Dendritic cell treated with granulocyte-macrophage colony-stimulating factor and Interleukin-4, amounts not matched to agents 40 ng/mL and 50 ng/mL, for 4 days (primary cell): ENCODE measurements at regions of chr7 and their contacts with region 1.

Region 1: GRCh38 chr7:141754939-141755338 is 9.0 kb upstream of the TAS2R3 start:
- H3K4me3 Mint-ChIP-seq: no peak overlapping the region
- H3K27ac Mint-ChIP-seq: no peak overlapping the region
- H3K4me1 Mint-ChIP-seq: no peaks in the 10 kb centered on the region
- H3K27me3 Mint-ChIP-seq: no peaks in the 10 kb centered on the region

Region 2: DNA sequence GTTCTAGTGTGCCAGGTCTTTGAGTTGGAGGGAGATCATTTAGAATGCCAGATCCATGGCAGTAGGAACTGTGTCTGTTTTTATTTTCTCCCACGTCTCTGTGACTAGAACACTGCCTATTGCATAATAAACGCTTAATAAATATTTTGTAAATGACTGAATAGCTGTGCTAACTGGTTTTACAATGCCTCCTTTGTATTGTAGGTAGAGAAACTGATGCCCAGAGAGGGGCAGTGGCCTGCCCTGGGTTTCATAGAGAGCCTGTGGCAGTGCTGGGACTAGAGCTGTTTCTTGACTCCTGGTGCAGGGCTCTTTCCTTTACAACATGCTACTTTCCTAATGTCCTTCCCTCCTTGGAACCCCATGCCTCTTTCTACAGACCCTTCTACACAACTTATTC is 37.6 kb after region 1 on chr7:
- intact Hi-C with region 1: no loop called
- H3K4me3 Mint-ChIP-seq: no peak overlapping the region
- H3K27ac Mint-ChIP-seq: no peak overlapping the region
- H3K4me1 Mint-ChIP-seq: peaks cover 5% of the 10 kb centered on the region
- H3K27me3 Mint-ChIP-seq: no peaks in the 10 kb centered on the region

Region 3: DNA sequence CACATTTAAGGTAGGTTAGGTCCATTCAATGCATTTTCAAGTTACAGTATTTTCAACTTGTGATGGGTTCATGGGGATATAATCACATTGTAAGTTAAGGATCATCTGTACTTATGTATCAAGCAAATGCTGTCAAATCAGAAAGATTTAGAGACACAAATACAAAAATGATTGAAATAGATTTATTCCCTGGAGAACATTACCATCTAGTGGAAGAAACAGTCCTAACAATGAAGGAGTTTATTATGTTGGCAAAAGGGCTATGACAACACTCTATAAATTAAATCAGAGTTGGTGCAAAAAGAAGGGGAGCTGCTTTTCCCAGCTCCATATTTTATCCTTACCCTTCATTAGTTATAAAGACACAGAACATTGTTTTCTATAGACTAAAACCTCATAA is 433.9 kb after region 1 on chr7:
- intact Hi-C with region 1: loop called (anchors 5 kb)
- H3K4me3 Mint-ChIP-seq: no peak overlapping the region
- H3K27ac Mint-ChIP-seq: no peak overlapping the region
- H3K4me1 Mint-ChIP-seq: peaks cover 19% of the 10 kb centered on the region
- H3K27me3 Mint-ChIP-seq: peaks cover 14% of the 10 kb centered on the region